ENCODE measurements at regions of chr3 and their contacts with region 1.

Region 1: GRCh38 chr3:115169808-115170207 is 22.7 kb upstream of the ZBTB20 start:
- DNase-seq: no peak
- ATAC-seq: no peak

Region 2: GRCh38 chr3:114290911-114291901 is 878.6 kb before region 1 on chr3:
- intact Hi-C with region 1: loop called (anchors 5 kb)
- DNase-seq: peak; percentile 80
- ATAC-seq: peak; percentile 31

Region 3: GRCh38 chr3:114362815-114363214 is 807.0 kb before region 1 on chr3:
- intact Hi-C with region 1: loop called (anchors 10 kb)
- DNase-seq: no peak
- ATAC-seq: no peak

Region 4: DNA sequence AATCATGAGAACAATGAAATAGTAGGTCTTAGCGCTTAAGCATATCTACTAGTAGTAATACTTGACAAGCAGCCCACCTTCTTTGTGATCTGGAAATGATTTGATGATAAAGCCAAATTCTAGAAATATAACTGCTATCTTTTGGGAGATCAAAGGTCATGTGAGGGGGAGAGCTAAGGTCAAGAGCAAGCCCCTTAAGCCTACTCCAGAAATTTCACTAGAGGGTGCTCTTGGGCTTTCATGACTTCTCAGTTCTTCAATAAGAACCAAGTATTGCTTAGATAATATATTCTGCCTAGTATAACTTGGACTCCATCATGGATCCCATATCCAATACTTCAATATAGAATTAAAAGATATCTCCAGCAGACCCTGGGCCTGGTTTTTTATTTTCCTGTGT is 342.3 kb before region 1 on chr3:
- intact Hi-C with region 1: loop called (anchors 2 kb)
- DNase-seq: no peak
- ATAC-seq: peak; percentile 62

Region 5: GRCh38 chr3:115092220-115092791 is 77.5 kb before region 1 on chr3:
- intact Hi-C with region 1: loop called (anchors 2 kb)
- DNase-seq: peak; percentile 71
- ATAC-seq: peak; percentile 98

Region 6: GRCh38 chr3:115208066-115208750 is 38.4 kb after region 1 on chr3:
- intact Hi-C with region 1: no loop called
- DNase-seq: no peak
- ATAC-seq: no peak

Region 7: GRCh38 chr3:115401298-115401697 is 231.5 kb after region 1 on chr3:
- intact Hi-C with region 1: no loop called
- DNase-seq: no peak
- ATAC-seq: no peak

Measured in Right ventricle myocardium inferior (tissue), 1 donor.